A549 (cell line): ENCODE measurements at regions of chr6 and their contacts with region 1.

Region 1: DNA sequence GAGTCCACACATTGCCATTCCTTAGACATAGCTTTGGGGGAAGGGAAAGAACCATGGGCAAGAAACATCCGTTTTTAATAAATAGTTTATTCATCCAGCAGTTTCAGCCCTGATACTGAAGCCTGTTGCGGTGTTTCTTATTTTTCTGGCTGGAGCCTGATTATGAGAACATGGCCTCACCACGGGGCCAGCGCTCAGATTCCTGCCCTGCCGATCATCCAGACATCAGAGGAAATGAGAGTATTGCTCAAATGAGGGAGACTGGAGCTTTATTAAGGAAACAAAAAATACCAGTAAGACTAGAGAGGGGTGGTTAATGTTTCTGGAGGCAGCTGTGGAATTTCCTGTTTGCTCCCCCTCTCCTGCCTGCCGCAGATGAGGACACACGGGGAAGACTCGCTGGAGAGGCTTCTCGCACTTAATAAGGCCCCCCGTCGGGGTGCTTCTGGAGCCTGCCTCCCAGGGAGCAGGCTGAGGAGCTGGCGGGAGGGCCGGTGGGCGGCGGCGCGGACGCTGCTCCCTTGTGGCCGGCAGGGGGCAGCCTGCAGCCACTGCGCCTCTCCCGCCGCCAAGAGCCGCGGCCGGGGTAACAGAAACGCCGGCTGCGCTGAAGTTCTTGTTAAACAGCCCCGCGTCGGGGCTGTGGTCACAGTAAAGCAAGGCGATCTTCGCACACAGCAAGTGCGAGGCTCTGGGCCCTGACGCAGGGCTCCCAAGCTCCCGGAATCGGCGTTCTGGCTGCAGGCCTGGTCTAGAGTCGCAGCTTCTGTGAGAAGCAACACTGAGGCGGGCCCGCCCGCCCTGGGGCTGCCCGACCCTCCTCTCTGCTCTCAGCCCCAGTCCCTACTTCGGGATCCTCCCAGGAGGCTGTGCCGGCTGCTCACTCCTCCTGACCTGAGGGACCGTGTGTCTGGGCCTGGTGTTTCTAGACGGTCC is 17.5 kb downstream of the LEMD2 start:
- DNase-seq: peak; percentile 49 to 69
- ATAC-seq: peak; percentile 76 to 83
- H3K4me3 ChIP-seq: no peak overlapping the region
- H3K27ac ChIP-seq: peak overlapping the region; percentile 41 to 80; a peak in 4 of 6 replicates
- H3K4me1 ChIP-seq: peaks cover 22% of the 10 kb centered on the region
- CTCF ChIP-seq: peak; percentile 85
- EP300 ChIP-seq: no peak
- POLR2A ChIP-seq: no peak
- RAD21 ChIP-seq: peak; percentile 67 to 87

Region 2: DNA sequence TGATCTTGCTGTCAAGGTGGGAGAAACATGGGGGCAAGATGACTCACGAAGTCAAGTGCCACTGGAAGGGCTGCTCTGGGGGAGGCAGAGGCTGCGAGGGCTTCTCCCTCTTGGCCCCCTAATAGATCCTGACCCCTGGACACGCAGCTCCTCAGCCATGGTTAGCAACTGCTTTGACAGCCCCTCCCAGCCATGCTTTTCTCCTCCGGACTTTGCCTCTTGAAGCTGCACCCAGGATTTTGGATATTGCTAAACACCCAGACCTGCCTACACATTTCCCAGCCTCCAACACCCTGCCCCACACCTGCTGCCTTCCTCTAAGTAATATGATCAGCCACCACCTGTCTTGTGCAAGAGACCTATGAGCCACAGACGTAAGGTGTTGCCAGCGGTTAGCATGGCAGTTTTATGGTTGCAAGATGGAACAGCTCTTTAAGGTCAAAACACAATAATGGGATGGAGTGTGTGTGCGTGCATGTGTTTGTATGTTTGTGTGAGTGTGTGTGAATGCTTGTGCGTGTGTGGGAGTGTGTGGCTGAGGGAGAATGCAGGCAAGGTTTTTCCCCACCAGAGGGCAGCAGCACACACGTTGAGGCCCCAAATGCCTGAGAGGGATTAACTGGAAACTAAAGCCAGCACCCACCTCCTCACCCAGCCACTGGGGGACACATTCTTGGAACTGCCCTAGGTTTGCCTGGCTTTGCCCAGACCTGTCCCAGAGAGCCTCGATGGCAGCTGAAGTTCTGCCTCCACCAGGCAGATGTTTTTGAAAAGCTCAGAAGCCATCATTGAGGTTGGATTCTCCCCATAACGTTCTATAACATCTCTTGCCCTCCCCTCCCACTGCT is 27.2 kb before region 1 on chr6:
- CTCF ChIA-PET with region 1: interaction called, 80 read pairs
- POLR2A ChIA-PET with region 1: no interaction called
- DNase-seq: peak; percentile 59 to 69
- ATAC-seq: peak; percentile 70 to 90; a peak in 5 of 6 replicates
- H3K4me3 ChIP-seq: no peak overlapping the region
- H3K27ac ChIP-seq: peak overlapping the region; percentile 68 to 77; a peak in 3 of 6 replicates
- H3K4me1 ChIP-seq: peaks cover 27% of the 10 kb centered on the region
- CTCF ChIP-seq: peak; percentile 79
- EP300 ChIP-seq: no peak
- POLR2A ChIP-seq: no peak
- RAD21 ChIP-seq: peak; percentile 70 to 76

Region 3: DNA sequence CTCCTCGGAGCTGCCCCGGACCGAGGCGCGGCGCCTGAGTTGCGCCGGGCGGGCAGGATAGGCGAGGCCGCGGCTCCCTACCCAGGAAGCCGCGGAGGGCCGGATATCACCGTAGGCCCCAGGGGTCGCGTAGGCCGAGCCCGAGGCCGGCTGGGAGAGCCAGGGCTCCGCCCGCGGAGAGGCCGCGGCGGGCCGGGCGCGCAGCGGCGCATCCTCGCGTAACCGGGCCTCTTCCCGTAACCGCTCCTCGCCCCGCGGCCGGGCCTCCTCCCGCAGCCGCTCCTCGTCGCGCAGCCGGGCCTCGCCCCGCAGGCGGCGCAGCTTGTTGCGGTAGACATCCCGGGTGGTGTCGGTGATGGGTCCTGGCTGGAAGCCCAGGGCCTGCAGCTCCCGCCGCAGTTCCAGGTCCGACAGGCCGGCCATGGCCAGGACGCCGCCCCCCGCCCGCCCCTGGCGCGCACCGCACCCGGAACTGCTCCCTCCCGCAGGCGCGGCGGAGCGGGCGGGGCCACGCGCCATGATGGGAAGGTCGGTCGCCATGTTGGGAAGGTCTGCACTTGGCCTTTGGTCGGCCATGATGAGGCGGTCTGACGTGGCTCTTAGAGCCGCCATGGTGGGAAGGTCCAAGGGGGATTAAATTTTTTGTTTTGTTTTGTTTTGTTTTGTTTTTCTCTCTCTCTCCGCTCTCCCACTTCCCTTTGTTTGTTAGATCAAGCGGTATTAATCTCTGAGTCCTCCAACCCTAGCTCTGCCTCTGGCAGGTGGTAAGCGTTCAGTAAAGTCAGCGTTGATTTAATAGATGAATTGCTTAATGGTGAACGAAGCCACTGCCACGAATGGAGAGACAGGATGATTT is 17.5 kb after region 1 on chr6 and contains the start of gene LEMD2:
- CTCF ChIA-PET with region 1: interaction called, 16 read pairs
- POLR2A ChIA-PET with region 1: no interaction called
- DNase-seq: peak; percentile 81 to 92
- ATAC-seq: peak; percentile 93 to 96
- H3K4me3 ChIP-seq: peak within 1 kb of the TSS; percentile 91
- H3K27ac ChIP-seq: peak within 1 kb of the TSS; percentile 94 to 99
- H3K4me1 ChIP-seq: peaks cover 20% of the 10 kb centered on the region
- CTCF ChIP-seq: no peak
- EP300 ChIP-seq: no peak
- POLR2A ChIP-seq: peak; percentile 73
- RAD21 ChIP-seq: no peak; a peak in 1 of 5 replicates
- polyA plus RNA-seq, gene LEMD2: 43.2 and 53.0 TPM in 2 replicates

Region 4: GRCh38 chr6:34021554-34022190 is 250.3 kb after region 1 on chr6:
- CTCF ChIA-PET with region 1: interaction called, 123 read pairs
- POLR2A ChIA-PET with region 1: no interaction called
- DNase-seq: no peak
- ATAC-seq: no peak
- H3K4me3 ChIP-seq: no peak overlapping the region
- H3K27ac ChIP-seq: no peak overlapping the region
- H3K4me1 ChIP-seq: no peaks in the 10 kb centered on the region
- CTCF ChIP-seq: no peak
- EP300 ChIP-seq: no peak
- POLR2A ChIP-seq: no peak
- RAD21 ChIP-seq: no peak

Region 5: GRCh38 chr6:34055223-34055933 is 284.0 kb after region 1 on chr6:
- CTCF ChIA-PET with region 1: interaction called, 42 read pairs
- POLR2A ChIA-PET with region 1: no interaction called
- DNase-seq: peak; percentile 64 to 68
- ATAC-seq: peak; percentile 82 to 96
- H3K4me3 ChIP-seq: no peak overlapping the region
- H3K27ac ChIP-seq: no peak overlapping the region
- H3K4me1 ChIP-seq: no peaks in the 10 kb centered on the region
- CTCF ChIP-seq: peak; percentile 71
- EP300 ChIP-seq: no peak
- POLR2A ChIP-seq: no peak
- RAD21 ChIP-seq: peak; percentile 49 to 58

Region 6: DNA sequence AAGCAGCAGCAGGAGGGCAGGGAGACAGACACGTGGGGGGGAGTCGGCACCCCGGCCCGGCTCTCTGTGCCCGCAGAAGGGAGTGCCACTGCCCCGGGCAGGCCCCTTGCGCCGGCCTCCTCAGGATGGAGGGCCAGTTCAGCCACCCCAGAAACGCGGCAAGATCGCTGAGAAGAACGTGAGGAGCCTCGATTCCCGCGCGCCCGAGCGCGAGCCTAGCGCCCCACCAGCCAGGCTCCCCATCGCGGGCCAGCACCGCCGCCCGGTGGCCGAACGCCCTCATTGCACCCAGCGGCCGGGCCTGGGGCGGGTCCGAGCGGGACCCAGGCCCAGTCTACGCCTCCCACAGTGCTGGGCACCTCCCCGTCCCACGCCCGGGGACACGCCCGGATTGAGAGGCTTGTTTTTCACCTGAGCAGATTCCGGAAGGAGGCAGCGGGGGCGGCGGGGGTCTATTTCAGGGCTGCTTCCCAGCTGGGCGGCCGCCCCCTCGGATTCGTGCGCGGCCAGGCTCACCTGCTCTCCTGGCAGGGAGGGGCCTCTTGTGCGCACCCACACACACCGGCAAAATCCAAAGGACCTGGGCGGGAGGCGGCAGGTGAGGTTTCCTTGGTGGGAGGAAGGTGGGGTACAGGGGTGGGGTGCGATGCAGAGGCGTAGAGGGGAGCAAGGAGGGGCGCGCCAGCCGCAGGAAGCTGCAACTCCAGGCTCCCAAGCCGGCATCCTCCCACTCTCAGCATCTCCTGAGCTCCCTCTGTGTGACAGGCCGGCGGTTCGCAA is 383.4 kb after region 1 on chr6:
- CTCF ChIA-PET with region 1: interaction called, 100 read pairs
- POLR2A ChIA-PET with region 1: no interaction called
- DNase-seq: peak; percentile 22 to 62
- ATAC-seq: peak; percentile 57 to 91
- H3K4me3 ChIP-seq: 0 out of 3 replicates have a peak overlapping the region, but pooled peaks have one; percentile 30
- H3K27ac ChIP-seq: peak overlapping the region; percentile 57 to 76; a peak in 3 of 6 replicates
- H3K4me1 ChIP-seq: no peaks in the 10 kb centered on the region
- CTCF ChIP-seq: peak; percentile 83
- EP300 ChIP-seq: no peak
- POLR2A ChIP-seq: no peak
- RAD21 ChIP-seq: peak; percentile 86 to 95